ENCODE measurements at regions of chr10 and their contacts with region 1.

Region 1: GRCh38 chr10:117174439-117175214 is 22.7 kb upstream of the KCNK18 start:
- DNase-seq: peak; percentile 51
- ATAC-seq: peak; percentile 94
- H3K4me3 ChIP-seq: peak overlapping the region; percentile 50; the same call in 1 of the 2 replicates
- H3K27ac ChIP-seq: no peak overlapping the region
- H3K4me1 ChIP-seq: peaks cover 7% of the 10 kb centered on the region
- H3K27me3 ChIP-seq: peaks cover 0 to 4% of the 10 kb centered on the region in 2 experiments; a peak in 1 of 4 replicates
- CTCF ChIP-seq: peak; percentile 85 to 97 (median 95)
- EP300 ChIP-seq: no peak
- POLR2A ChIP-seq: no peak
- RAD21 ChIP-seq: peak; percentile 88

Region 2: GRCh38 chr10:116688241-116688711 is 486.4 kb before region 1 on chr10:
- CTCF ChIA-PET with region 1: interaction called, 25 read pairs
- POLR2A ChIA-PET with region 1: no interaction called
- RAD21 ChIA-PET with region 1: interaction called, 4 read pairs
- SMC1A ChIA-PET with region 1: interaction called, 3 read pairs
- in situ Hi-C with region 1: loop called (anchors 5 kb)
- intact Hi-C with region 1: no loop called
- DNase-seq: no peak
- ATAC-seq: no peak
- H3K4me3 ChIP-seq: no peak overlapping the region
- H3K27ac ChIP-seq: no peak overlapping the region
- H3K4me1 ChIP-seq: no peaks in the 10 kb centered on the region
- H3K27me3 ChIP-seq: no peaks in the 10 kb centered on the region
- CTCF ChIP-seq: no peak
- EP300 ChIP-seq: no peak
- POLR2A ChIP-seq: no peak
- RAD21 ChIP-seq: no peak

Region 3: GRCh38 chr10:116796910-116797513 is 377.6 kb before region 1 on chr10:
- CTCF ChIA-PET with region 1: interaction called, 286 read pairs
- POLR2A ChIA-PET with region 1: interaction called, 3 read pairs
- RAD21 ChIA-PET with region 1: interaction called, 68 read pairs
- SMC1A ChIA-PET with region 1: interaction called, 72 read pairs
- in situ Hi-C with region 1: loop called (anchors 5 kb)
- intact Hi-C with region 1: loop called (anchors 1 kb)
- DNase-seq: no peak
- ATAC-seq: peak; percentile 95
- H3K4me3 ChIP-seq: no peak overlapping the region
- H3K27ac ChIP-seq: no peak overlapping the region
- H3K4me1 ChIP-seq: no peaks in the 10 kb centered on the region
- H3K27me3 ChIP-seq: no peaks in the 10 kb centered on the region
- CTCF ChIP-seq: peak; percentile 87 to 93 (median 90)
- EP300 ChIP-seq: no peak
- POLR2A ChIP-seq: no peak
- RAD21 ChIP-seq: peak; percentile 95

Region 4: GRCh38 chr10:116880716-116881482 is 293.7 kb before region 1 on chr10:
- CTCF ChIA-PET with region 1: no interaction called
- POLR2A ChIA-PET with region 1: no interaction called
- RAD21 ChIA-PET with region 1: no interaction called
- SMC1A ChIA-PET with region 1: no interaction called
- in situ Hi-C with region 1: no loop called
- intact Hi-C with region 1: no loop called
- DNase-seq: no peak
- ATAC-seq: no peak
- H3K4me3 ChIP-seq: no peak overlapping the region
- H3K27ac ChIP-seq: no peak overlapping the region
- H3K4me1 ChIP-seq: no peaks in the 10 kb centered on the region
- H3K27me3 ChIP-seq: no peaks in the 10 kb centered on the region; a peak in 1 of 4 replicates
- CTCF ChIP-seq: no peak
- EP300 ChIP-seq: no peak
- POLR2A ChIP-seq: no peak
- RAD21 ChIP-seq: no peak

Region 5: GRCh38 chr10:116990262-116990800 is 184.3 kb before region 1 on chr10:
- CTCF ChIA-PET with region 1: interaction called, 3 read pairs
- POLR2A ChIA-PET with region 1: no interaction called
- RAD21 ChIA-PET with region 1: no interaction called
- SMC1A ChIA-PET with region 1: no interaction called
- in situ Hi-C with region 1: no loop called
- intact Hi-C with region 1: loop called (anchors 10 kb)
- DNase-seq: no peak
- ATAC-seq: no peak
- H3K4me3 ChIP-seq: no peak overlapping the region
- H3K27ac ChIP-seq: no peak overlapping the region
- H3K4me1 ChIP-seq: no peaks in the 10 kb centered on the region
- H3K27me3 ChIP-seq: no peaks in the 10 kb centered on the region
- CTCF ChIP-seq: no peak
- EP300 ChIP-seq: no peak
- POLR2A ChIP-seq: no peak
- RAD21 ChIP-seq: no peak

Region 6: DNA sequence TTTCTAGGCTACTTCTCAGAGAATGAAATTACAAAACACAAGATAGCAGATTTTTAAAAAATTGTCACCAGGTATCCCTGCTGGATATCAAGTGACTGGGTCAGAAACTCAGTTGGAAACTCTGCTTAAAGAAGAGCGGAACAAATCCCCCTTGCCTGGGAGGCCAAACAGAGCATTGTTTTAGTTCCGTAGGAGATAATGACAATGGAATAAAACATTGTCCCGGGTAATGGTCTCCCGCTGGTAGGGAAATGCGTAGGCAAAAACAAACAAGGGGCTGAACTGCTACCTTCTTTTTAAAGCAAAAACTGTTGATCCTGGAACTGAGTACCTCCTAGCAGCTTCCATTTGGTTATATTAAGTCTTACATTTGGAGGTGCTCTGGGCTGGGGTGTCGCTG is 15.2 kb before region 1 on chr10:
- CTCF ChIA-PET with region 1: interaction called, 19 read pairs
- POLR2A ChIA-PET with region 1: no interaction called
- RAD21 ChIA-PET with region 1: interaction called, 4 read pairs
- SMC1A ChIA-PET with region 1: interaction called, 3 read pairs
- in situ Hi-C with region 1: no loop called
- intact Hi-C with region 1: no loop called
- DNase-seq: no peak
- ATAC-seq: no peak
- H3K4me3 ChIP-seq: no peak overlapping the region
- H3K27ac ChIP-seq: no peak overlapping the region
- H3K4me1 ChIP-seq: no peaks in the 10 kb centered on the region
- H3K27me3 ChIP-seq: peaks cover 8 to 21% of the 10 kb centered on the region in 2 experiments
- CTCF ChIP-seq: no peak
- EP300 ChIP-seq: no peak
- POLR2A ChIP-seq: no peak
- RAD21 ChIP-seq: no peak

Region 7: GRCh38 chr10:117204316-117204715 is 29.7 kb after region 1 on chr10:
- CTCF ChIA-PET with region 1: no interaction called
- POLR2A ChIA-PET with region 1: no interaction called
- RAD21 ChIA-PET with region 1: no interaction called
- SMC1A ChIA-PET with region 1: no interaction called
- in situ Hi-C with region 1: no loop called
- intact Hi-C with region 1: no loop called
- DNase-seq: no peak
- ATAC-seq: no peak
- H3K4me3 ChIP-seq: no peak overlapping the region
- H3K27ac ChIP-seq: no peak overlapping the region
- H3K4me1 ChIP-seq: no peaks in the 10 kb centered on the region
- H3K27me3 ChIP-seq: no peaks in the 10 kb centered on the region; a peak in 1 of 4 replicates
- CTCF ChIP-seq: no peak
- EP300 ChIP-seq: no peak
- POLR2A ChIP-seq: no peak
- RAD21 ChIP-seq: no peak

Region 8: GRCh38 chr10:117294039-117294645 is 119.5 kb after region 1 on chr10:
- CTCF ChIA-PET with region 1: no interaction called
- POLR2A ChIA-PET with region 1: no interaction called
- RAD21 ChIA-PET with region 1: no interaction called
- SMC1A ChIA-PET with region 1: no interaction called
- in situ Hi-C with region 1: no loop called
- intact Hi-C with region 1: no loop called
- DNase-seq: no peak
- ATAC-seq: no peak
- H3K4me3 ChIP-seq: no peak overlapping the region
- H3K27ac ChIP-seq: no peak overlapping the region
- H3K4me1 ChIP-seq: no peaks in the 10 kb centered on the region
- H3K27me3 ChIP-seq: no peaks in the 10 kb centered on the region
- CTCF ChIP-seq: no peak
- EP300 ChIP-seq: no peak
- POLR2A ChIP-seq: no peak
- RAD21 ChIP-seq: no peak

Measured in GM12878 (cell line).